IMR-90 (cell line): ENCODE measurements at regions of chr5 and their contacts with region 1.

Region 1: GRCh38 chr5:119943148-119943547 is 313.8 kb downstream of the FAM170A start:
- DNase-seq: peak; percentile 28
- ATAC-seq: peak; percentile 75
- H3K4me3 ChIP-seq: no peak overlapping the region
- H3K27ac ChIP-seq: no peak overlapping the region
- H3K4me1 ChIP-seq: no peaks in the 10 kb centered on the region
- H3K27me3 ChIP-seq: no peaks in the 10 kb centered on the region
- CTCF ChIP-seq: peak; percentile 50
- POLR2A ChIP-seq: no peak
- RAD21 ChIP-seq: peak; percentile 58

Region 2: DNA sequence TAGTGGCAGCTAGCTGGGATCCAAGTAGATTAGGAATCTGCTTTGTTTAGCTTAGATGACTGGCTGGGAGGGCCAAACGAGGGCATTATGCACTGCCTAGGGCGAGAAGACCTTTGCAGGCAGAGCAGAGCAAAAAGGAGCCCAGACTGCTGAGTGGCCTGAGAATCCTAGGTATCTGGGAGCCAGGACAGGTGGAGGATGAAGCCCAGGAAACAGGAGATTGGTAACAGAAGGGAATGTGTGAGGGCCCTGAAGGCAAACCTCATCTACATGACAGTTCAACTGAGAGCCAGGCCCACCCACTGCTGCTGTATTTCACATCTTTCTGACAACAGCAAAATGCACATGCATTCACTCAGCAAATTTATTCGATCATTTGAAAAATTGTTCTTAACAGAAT is 1147.1 kb before region 1 on chr5:
- CTCF ChIA-PET with region 1: no interaction called
- POLR2A ChIA-PET with region 1: no interaction called
- dilution Hi-C with region 1: no loop called
- in situ Hi-C with region 1: no loop called
- intact Hi-C with region 1: no loop called
- DNase-seq: no peak
- ATAC-seq: no peak
- H3K4me3 ChIP-seq: no peak overlapping the region
- H3K27ac ChIP-seq: no peak overlapping the region
- H3K4me1 ChIP-seq: no peaks in the 10 kb centered on the region
- H3K27me3 ChIP-seq: no peaks in the 10 kb centered on the region
- CTCF ChIP-seq: no peak
- POLR2A ChIP-seq: no peak
- RAD21 ChIP-seq: no peak

Region 3: GRCh38 chr5:119902593-119902992 is 40.6 kb before region 1 on chr5:
- CTCF ChIA-PET with region 1: no interaction called
- POLR2A ChIA-PET with region 1: no interaction called
- dilution Hi-C with region 1: no loop called
- in situ Hi-C with region 1: no loop called
- intact Hi-C with region 1: loop called (anchors 1 kb)
- DNase-seq: no peak
- ATAC-seq: no peak
- H3K4me3 ChIP-seq: no peak overlapping the region
- H3K27ac ChIP-seq: no peak overlapping the region
- H3K4me1 ChIP-seq: no peaks in the 10 kb centered on the region
- H3K27me3 ChIP-seq: no peaks in the 10 kb centered on the region
- CTCF ChIP-seq: no peak
- POLR2A ChIP-seq: no peak
- RAD21 ChIP-seq: no peak

Region 4: GRCh38 chr5:120684749-120685415 is 741.7 kb after region 1 on chr5:
- CTCF ChIA-PET with region 1: no interaction called
- POLR2A ChIA-PET with region 1: no interaction called
- dilution Hi-C with region 1: no loop called
- in situ Hi-C with region 1: no loop called
- intact Hi-C with region 1: loop called (anchors 10 kb)
- DNase-seq: peak; percentile 12
- ATAC-seq: peak; percentile 46; the same call in 1 of the 2 replicates
- H3K4me3 ChIP-seq: no peak overlapping the region
- H3K27ac ChIP-seq: no peak overlapping the region
- H3K4me1 ChIP-seq: peaks cover 5% of the 10 kb centered on the region; the same call in 1 of the 2 replicates
- H3K27me3 ChIP-seq: no peaks in the 10 kb centered on the region
- CTCF ChIP-seq: peak; percentile 26; the same call in 1 of the 2 replicates
- POLR2A ChIP-seq: no peak
- RAD21 ChIP-seq: no peak